Mammary epithelial cell (primary cell): ENCODE measurements at regions of chr19 and their contacts with region 1.

Region 1: GRCh38 chr19:57927587-57927986 is 7.6 kb downstream of the ZNF418 start:
- DNase-seq: no peak
- H3K4me3 ChIP-seq: no peak overlapping the region
- H3K27ac ChIP-seq: no peak overlapping the region
- H3K4me1 ChIP-seq: no peaks in the 10 kb centered on the region
- H3K27me3 ChIP-seq: no peaks in the 10 kb centered on the region
- CTCF ChIP-seq: no peak

Region 2: GRCh38 chr19:57786291-57786690 is 141.3 kb before region 1 on chr19:
- CTCF ChIA-PET with region 1: no interaction called
- dilution Hi-C with region 1: loop called (anchors 10 kb)
- in situ Hi-C with region 1: no loop called
- intact Hi-C with region 1: no loop called
- DNase-seq: no peak
- H3K4me3 ChIP-seq: no peak overlapping the region
- H3K27ac ChIP-seq: no peak overlapping the region
- H3K4me1 ChIP-seq: no peaks in the 10 kb centered on the region
- H3K27me3 ChIP-seq: no peaks in the 10 kb centered on the region
- CTCF ChIP-seq: no peak

Region 3: GRCh38 chr19:57992841-57993240 is 65.3 kb after region 1 on chr19:
- CTCF ChIA-PET with region 1: no interaction called
- dilution Hi-C with region 1: no loop called
- in situ Hi-C with region 1: no loop called
- intact Hi-C with region 1: no loop called
- DNase-seq: no peak
- H3K4me3 ChIP-seq: no peak overlapping the region
- H3K27ac ChIP-seq: no peak overlapping the region
- H3K4me1 ChIP-seq: no peaks in the 10 kb centered on the region
- H3K27me3 ChIP-seq: no peaks in the 10 kb centered on the region
- CTCF ChIP-seq: no peak